CD8-positive, alpha-beta T cell (primary cell): ENCODE measurements at regions of chr2 and their contacts with region 1.

Region 1: DNA sequence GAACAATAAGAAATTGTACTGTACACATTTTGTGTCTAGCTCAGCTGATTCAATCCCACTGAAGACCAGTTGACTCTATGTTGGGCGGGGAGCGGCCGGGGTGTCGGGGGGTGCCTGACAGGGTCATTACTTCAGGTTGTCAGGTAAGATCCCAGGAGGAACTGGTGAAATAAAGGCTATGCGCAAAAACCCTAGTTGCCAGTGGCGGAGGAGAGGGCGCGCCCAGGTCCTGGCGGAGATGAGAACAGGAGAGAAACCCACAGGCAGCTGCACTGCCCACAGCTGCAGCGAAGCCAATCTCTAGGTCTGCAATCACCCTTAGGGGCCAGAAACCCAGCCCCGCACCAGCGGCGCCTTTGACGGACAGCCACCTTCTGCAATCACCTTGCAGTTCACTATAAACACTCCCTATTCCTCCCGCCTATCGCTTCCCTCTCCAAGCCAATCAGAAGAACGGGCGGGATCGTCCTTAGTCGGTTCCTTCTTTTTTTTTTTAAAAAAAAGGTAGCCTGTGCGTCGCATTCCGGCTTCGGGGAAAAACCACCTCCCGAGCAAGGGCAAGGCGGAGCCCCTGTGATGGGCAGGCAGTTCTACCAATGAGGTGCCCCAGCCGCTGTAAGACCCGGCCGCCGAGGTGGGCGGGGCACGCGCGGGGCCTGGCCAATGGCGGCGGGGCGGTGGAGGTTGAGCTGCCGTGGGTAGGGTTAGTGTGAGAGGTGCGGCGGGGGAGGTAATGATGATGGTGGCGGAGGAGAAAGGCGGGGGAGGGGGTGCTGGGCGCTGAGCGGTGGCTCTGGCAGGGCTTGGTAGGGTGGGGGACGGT is at the start of gene EHBP1:
- DNase-seq: peak; percentile 93 to 99 (median 97)
- ATAC-seq: peak; percentile 96
- H3K4me3 ChIP-seq: peak within 1 kb of the TSS; percentile 74 to 77
- H3K4me3 Mint-ChIP-seq: peak within 1 kb of the TSS; percentile 85
- H3K27ac ChIP-seq: peak within 1 kb of the TSS; percentile 36 to 65
- H3K27ac Mint-ChIP-seq: peak within 1 kb of the TSS; percentile 79
- H3K4me1 ChIP-seq: peaks cover 11% of the 10 kb centered on the region
- H3K4me1 Mint-ChIP-seq: peaks cover 41% of the 10 kb centered on the region
- H3K27me3 ChIP-seq: no peaks in the 10 kb centered on the region
- H3K27me3 Mint-ChIP-seq: no peaks in the 10 kb centered on the region
- CTCF ChIP-seq: no peak
- total RNA-seq, gene EHBP1: 16.2 to 16.7 TPM

Region 2: GRCh38 chr2:61764035-61764800 is 941.0 kb before region 1 on chr2:
- CTCF ChIA-PET with region 1: no interaction called
- POLR2A ChIA-PET with region 1: no interaction called
- intact Hi-C with region 1: loop called in 1 of 2 experiments (anchors 2 kb)
- DNase-seq: peak; percentile 91 to 99 (median 94)
- ATAC-seq: peak; percentile 97
- H3K4me3 ChIP-seq: peak overlapping the region; percentile 90 to 91
- H3K4me3 Mint-ChIP-seq: peak overlapping the region; percentile 96
- H3K27ac ChIP-seq: peak overlapping the region; percentile 99 to 100
- H3K27ac Mint-ChIP-seq: peak overlapping the region; percentile 98
- H3K4me1 ChIP-seq: no peaks in the 10 kb centered on the region
- H3K4me1 Mint-ChIP-seq: peaks cover 12% of the 10 kb centered on the region
- H3K27me3 ChIP-seq: no peaks in the 10 kb centered on the region
- H3K27me3 Mint-ChIP-seq: no peaks in the 10 kb centered on the region
- CTCF ChIP-seq: no peak

Region 3: DNA sequence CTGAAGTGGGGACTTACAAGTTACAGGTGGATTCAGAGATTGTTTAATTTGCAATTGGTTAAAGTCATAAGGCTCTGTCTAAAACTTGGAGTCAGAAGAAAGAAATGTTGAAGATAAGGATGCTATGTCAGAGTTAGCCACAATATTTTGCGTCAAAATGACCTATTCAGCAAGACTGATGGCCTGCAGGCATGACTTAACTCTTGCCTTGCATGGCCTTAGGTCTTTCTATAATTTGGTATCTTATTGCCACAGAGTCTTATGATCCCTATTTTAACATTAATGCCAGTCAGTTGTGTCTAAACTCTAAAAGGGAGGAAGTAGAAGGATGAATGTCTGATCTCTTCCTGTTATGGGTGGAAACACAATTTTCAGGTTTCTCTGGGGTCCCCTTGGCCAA is 804.9 kb before region 1 on chr2:
- CTCF ChIA-PET with region 1: no interaction called
- POLR2A ChIA-PET with region 1: no interaction called
- intact Hi-C with region 1: loop called (anchors 5 kb)
- DNase-seq: no peak
- ATAC-seq: no peak
- H3K4me3 ChIP-seq: no peak overlapping the region
- H3K4me3 Mint-ChIP-seq: no peak overlapping the region
- H3K27ac ChIP-seq: no peak overlapping the region
- H3K27ac Mint-ChIP-seq: no peak overlapping the region
- H3K4me1 ChIP-seq: peaks cover 7% of the 10 kb centered on the region
- H3K4me1 Mint-ChIP-seq: peaks cover 6% of the 10 kb centered on the region
- H3K27me3 ChIP-seq: no peaks in the 10 kb centered on the region
- H3K27me3 Mint-ChIP-seq: no peaks in the 10 kb centered on the region
- CTCF ChIP-seq: no peak

Region 4: GRCh38 chr2:62112179-62112578 is 593.0 kb before region 1 on chr2:
- CTCF ChIA-PET with region 1: no interaction called
- POLR2A ChIA-PET with region 1: no interaction called
- intact Hi-C with region 1: no loop called
- DNase-seq: no peak
- ATAC-seq: no peak
- H3K4me3 ChIP-seq: no peak overlapping the region
- H3K4me3 Mint-ChIP-seq: no peak overlapping the region
- H3K27ac ChIP-seq: no peak overlapping the region
- H3K27ac Mint-ChIP-seq: no peak overlapping the region
- H3K4me1 ChIP-seq: no peaks in the 10 kb centered on the region
- H3K4me1 Mint-ChIP-seq: peaks cover 8% of the 10 kb centered on the region
- H3K27me3 ChIP-seq: no peaks in the 10 kb centered on the region
- H3K27me3 Mint-ChIP-seq: no peaks in the 10 kb centered on the region
- CTCF ChIP-seq: no peak

Region 5: GRCh38 chr2:62306751-62307468 is 398.3 kb before region 1 on chr2:
- CTCF ChIA-PET with region 1: no interaction called
- POLR2A ChIA-PET with region 1: no interaction called
- intact Hi-C with region 1: loop called in 1 of 2 experiments (anchors 10 kb)
- DNase-seq: peak in 6 of 9 experiments; percentile 17 to 85 (median 38)
- ATAC-seq: peak; percentile 14
- H3K4me3 ChIP-seq: no peak overlapping the region
- H3K4me3 Mint-ChIP-seq: peak overlapping the region; percentile 13
- H3K27ac ChIP-seq: peak overlapping the region in 1 of 2 experiments; percentile 73
- H3K27ac Mint-ChIP-seq: peak overlapping the region; percentile 82
- H3K4me1 ChIP-seq: peaks cover 89% of the 10 kb centered on the region
- H3K4me1 Mint-ChIP-seq: peaks cover 93% of the 10 kb centered on the region
- H3K27me3 ChIP-seq: no peaks in the 10 kb centered on the region
- H3K27me3 Mint-ChIP-seq: no peaks in the 10 kb centered on the region
- CTCF ChIP-seq: no peak

Region 6: DNA sequence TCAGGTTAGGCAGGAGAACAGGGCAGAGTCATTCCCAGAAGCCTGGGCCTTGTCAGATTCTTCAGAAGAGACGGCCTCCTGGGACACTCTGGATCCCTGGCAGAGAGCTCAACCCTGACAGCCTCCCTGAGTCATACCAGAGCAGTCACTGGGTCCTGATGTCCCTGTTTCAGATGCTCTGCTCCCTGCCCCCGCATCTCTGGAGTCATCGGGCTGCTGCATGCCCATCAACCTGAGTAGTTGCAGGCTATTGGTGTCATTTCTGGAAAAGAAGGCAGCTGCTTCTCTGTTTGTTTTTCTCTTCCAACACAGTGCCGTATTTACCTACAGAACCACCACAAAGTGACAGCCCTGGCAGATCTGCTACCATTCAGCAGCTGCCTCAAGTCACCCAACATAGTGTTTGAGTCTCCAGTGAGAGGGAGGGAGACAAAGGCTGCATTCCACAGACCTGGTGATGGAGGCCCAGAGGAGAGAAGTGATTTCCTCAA is 364.2 kb before region 1 on chr2:
- CTCF ChIA-PET with region 1: no interaction called
- POLR2A ChIA-PET with region 1: no interaction called
- intact Hi-C with region 1: no loop called
- DNase-seq: no peak
- ATAC-seq: no peak
- H3K4me3 ChIP-seq: no peak overlapping the region
- H3K4me3 Mint-ChIP-seq: no peak overlapping the region
- H3K27ac ChIP-seq: no peak overlapping the region
- H3K27ac Mint-ChIP-seq: no peak overlapping the region
- H3K4me1 ChIP-seq: no peaks in the 10 kb centered on the region
- H3K4me1 Mint-ChIP-seq: no peaks in the 10 kb centered on the region
- H3K27me3 ChIP-seq: no peaks in the 10 kb centered on the region
- H3K27me3 Mint-ChIP-seq: no peaks in the 10 kb centered on the region
- CTCF ChIP-seq: no peak

Region 7: GRCh38 chr2:62826141-62826540 is 120.9 kb after region 1 on chr2:
- CTCF ChIA-PET with region 1: no interaction called
- POLR2A ChIA-PET with region 1: no interaction called
- intact Hi-C with region 1: no loop called
- DNase-seq: no peak
- ATAC-seq: no peak
- H3K4me3 ChIP-seq: no peak overlapping the region
- H3K4me3 Mint-ChIP-seq: no peak overlapping the region
- H3K27ac ChIP-seq: no peak overlapping the region
- H3K27ac Mint-ChIP-seq: no peak overlapping the region
- H3K4me1 ChIP-seq: no peaks in the 10 kb centered on the region
- H3K4me1 Mint-ChIP-seq: no peaks in the 10 kb centered on the region
- H3K27me3 ChIP-seq: no peaks in the 10 kb centered on the region
- H3K27me3 Mint-ChIP-seq: no peaks in the 10 kb centered on the region
- CTCF ChIP-seq: no peak